PC-3 (cell line): ENCODE measurements at regions of chr2 and their contacts with region 1.

Region 1: GRCh38 chr2:24084386-24085361 is at the start of gene TP53I3:
- DNase-seq: peak; percentile 93
- ATAC-seq: peak; percentile 91
- H3K4me3 ChIP-seq: peak within 1 kb of the TSS; percentile 67
- H3K27ac ChIP-seq: peak within 1 kb of the TSS; percentile 36
- H3K4me1 ChIP-seq: peaks cover 14% of the 10 kb centered on the region
- H3K27me3 ChIP-seq: no peaks in the 10 kb centered on the region
- CTCF ChIP-seq: peak; percentile 88
- total RNA-seq, gene TP53I3: 37.0 and 42.4 TPM in 2 replicates

Region 2: GRCh38 chr2:23824777-23825212 is 259.9 kb before region 1 on chr2:
- CTCF ChIA-PET with region 1: interaction called, 9 read pairs
- POLR2A ChIA-PET with region 1: no interaction called
- intact Hi-C with region 1: loop called (anchors 1 kb)
- DNase-seq: peak; percentile 82
- ATAC-seq: peak; percentile 64
- H3K4me3 ChIP-seq: no peak overlapping the region
- H3K27ac ChIP-seq: no peak overlapping the region
- H3K4me1 ChIP-seq: peaks cover 12% of the 10 kb centered on the region; the same call in 1 of the 2 replicates
- H3K27me3 ChIP-seq: no peaks in the 10 kb centered on the region
- CTCF ChIP-seq: peak; percentile 81

Region 3: GRCh38 chr2:23926750-23927571 is 157.7 kb before region 1 on chr2 and contains the start of gene ATAD2B:
- CTCF ChIA-PET with region 1: interaction called, 24 read pairs
- POLR2A ChIA-PET with region 1: interaction called, 13 read pairs
- intact Hi-C with region 1: loop called (anchors 1 kb)
- DNase-seq: peak; percentile 98
- ATAC-seq: peak; percentile 85
- H3K4me3 ChIP-seq: peak within 1 kb of the TSS; percentile 89
- H3K27ac ChIP-seq: peak within 1 kb of the TSS; percentile 85
- H3K4me1 ChIP-seq: peaks cover 17% of the 10 kb centered on the region
- H3K27me3 ChIP-seq: no peaks in the 10 kb centered on the region
- CTCF ChIP-seq: peak; percentile 83
- total RNA-seq, gene ATAD2B: 8.6 TPM in 2 replicates

Region 4: DNA sequence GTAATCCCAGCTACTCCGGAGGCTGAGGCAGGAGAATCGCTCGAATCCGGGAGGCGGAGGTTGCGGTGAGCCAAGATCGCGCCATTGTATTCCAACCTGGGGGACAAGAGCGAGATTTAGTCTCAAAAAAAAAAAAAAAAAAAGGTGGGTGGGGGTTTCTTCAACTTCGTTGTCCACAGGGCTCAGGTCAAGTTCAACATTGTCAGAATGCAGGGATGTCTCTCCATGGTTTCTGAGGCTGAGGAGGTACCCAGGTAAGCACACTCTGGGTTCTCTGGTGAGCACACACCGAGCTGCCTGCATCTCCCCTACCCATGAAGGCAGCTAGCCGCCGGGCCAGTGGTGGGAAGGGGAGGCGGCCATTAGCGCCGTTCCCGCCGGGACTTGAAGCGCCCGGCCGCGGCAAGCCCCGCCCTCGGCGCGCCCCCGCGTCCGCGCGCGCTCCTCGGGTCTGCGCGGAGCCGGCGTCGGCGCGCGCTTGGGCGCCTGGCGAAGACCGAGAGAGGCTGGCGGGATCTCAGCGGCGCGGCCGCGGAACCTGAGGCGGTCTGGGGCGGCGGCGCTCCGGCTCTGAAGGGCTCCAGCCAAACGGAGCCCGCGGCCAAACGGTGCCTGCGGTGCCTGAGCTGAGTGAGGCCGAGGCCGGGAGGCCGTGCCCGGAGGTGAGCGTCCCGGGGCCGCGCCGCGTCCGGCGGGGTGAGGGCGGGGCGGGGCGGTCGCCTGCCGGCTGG is 144.5 kb before region 1 on chr2 and contains the start of gene UBXN2A:
- CTCF ChIA-PET with region 1: no interaction called
- POLR2A ChIA-PET with region 1: no interaction called
- intact Hi-C with region 1: loop called (anchors 2 kb)
- DNase-seq: peak; percentile 87
- ATAC-seq: peak; percentile 73
- H3K4me3 ChIP-seq: peak within 1 kb of the TSS; percentile 90
- H3K27ac ChIP-seq: 0 out of 2 replicates have a peak within 1 kb of the TSS, but pooled peaks have one; percentile 5
- H3K4me1 ChIP-seq: peaks cover 10% of the 10 kb centered on the region; the same call in 1 of the 2 replicates
- H3K27me3 ChIP-seq: no peaks in the 10 kb centered on the region
- CTCF ChIP-seq: no peak
- total RNA-seq, gene UBXN2A: 14.2 and 15.4 TPM in 2 replicates

Region 5: DNA sequence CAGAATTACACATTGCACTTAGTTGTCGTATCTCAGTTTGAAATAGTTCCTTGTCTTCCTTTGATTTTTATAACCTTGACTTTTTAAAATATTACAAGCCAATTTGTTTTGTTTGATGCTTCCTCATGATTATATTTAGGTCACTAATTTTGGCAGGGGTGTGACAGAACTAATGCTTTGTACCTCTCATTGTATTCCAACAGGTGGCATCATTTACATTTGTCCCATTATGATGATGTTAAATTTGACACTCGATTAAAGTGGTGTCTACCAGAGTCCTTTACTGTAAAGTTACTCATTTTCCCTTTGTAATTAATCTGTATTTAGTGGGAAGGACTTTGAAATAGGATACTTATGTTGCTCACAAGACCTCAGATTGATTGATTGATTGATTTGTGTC is 96.3 kb before region 1 on chr2:
- CTCF ChIA-PET with region 1: no interaction called
- POLR2A ChIA-PET with region 1: no interaction called
- intact Hi-C with region 1: loop called (anchors 1 kb)
- DNase-seq: peak; percentile 62
- ATAC-seq: peak; percentile 88
- H3K4me3 ChIP-seq: no peak overlapping the region
- H3K27ac ChIP-seq: no peak overlapping the region
- H3K4me1 ChIP-seq: no peaks in the 10 kb centered on the region
- H3K27me3 ChIP-seq: no peaks in the 10 kb centered on the region
- CTCF ChIP-seq: peak; percentile 80

Region 6: DNA sequence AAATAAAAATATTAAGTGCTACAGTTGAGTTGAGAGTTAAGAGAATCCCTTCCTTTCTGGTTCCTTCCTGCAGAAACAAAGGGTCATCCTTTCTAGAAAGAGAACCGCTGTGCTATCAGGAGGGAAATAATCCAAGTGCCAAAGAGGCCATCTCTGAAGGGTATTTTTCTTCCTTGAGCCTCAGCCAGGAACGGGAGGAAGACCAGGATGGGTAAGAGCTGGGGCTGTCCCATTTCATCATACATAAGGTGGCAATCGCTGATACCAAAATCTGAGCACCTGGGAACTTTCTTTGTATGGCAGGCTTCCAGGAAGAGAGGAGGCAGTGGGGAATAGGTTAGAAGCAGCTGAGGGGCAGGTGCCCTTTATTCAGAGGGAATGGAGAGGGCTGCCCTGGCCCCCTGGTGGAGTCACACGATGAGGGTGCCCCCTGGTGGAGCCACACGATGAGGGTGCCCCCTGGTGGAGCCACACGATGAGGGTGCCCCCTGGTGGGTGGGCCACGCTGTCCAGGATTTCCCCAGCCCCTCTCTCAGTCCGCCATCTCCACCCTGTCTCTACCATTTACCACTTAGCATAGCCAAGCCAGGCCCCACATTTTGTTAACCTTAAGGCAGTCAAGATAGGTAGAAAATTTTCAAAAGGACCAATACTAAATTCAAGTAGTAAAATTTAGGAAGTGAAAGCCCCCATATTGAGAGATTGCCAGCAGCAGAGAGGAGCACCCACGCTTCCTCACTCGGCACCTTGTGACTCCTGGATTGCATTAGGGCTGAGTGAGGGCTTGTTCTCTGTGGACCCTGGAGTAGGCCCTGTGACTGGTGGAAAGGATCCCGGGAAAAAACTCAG is 79.7 kb after region 1 on chr2:
- CTCF ChIA-PET with region 1: no interaction called
- POLR2A ChIA-PET with region 1: no interaction called
- intact Hi-C with region 1: loop called (anchors 1 kb)
- DNase-seq: peak; percentile 30
- ATAC-seq: peak; percentile 27; the same call in 1 of the 2 replicates
- H3K4me3 ChIP-seq: no peak overlapping the region
- H3K27ac ChIP-seq: no peak overlapping the region
- H3K4me1 ChIP-seq: no peaks in the 10 kb centered on the region
- H3K27me3 ChIP-seq: no peaks in the 10 kb centered on the region
- CTCF ChIP-seq: peak; percentile 91

Region 7: DNA sequence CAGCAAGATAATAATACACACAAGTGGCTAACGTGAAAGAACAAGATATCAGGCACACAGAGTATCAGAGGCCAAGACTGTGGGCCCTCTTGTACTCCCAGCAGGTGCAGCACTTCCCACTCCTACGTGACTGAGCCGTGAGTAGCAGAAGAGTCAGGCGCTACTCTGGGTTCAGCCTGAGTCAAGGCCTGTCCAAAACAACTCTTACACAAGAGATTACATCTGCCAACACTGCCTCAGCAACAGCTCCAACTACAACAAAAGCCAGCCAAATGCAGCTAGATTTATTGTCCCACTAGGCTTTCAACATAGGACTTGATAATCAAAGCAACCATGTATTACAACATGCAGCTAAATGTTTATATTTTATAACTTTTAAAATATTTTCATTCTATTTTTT is 219.4 kb after region 1 on chr2:
- CTCF ChIA-PET with region 1: no interaction called
- POLR2A ChIA-PET with region 1: no interaction called
- intact Hi-C with region 1: no loop called
- DNase-seq: no peak
- ATAC-seq: no peak
- H3K4me3 ChIP-seq: no peak overlapping the region
- H3K27ac ChIP-seq: no peak overlapping the region
- H3K4me1 ChIP-seq: no peaks in the 10 kb centered on the region
- H3K27me3 ChIP-seq: no peaks in the 10 kb centered on the region
- CTCF ChIP-seq: no peak

Region 8: DNA sequence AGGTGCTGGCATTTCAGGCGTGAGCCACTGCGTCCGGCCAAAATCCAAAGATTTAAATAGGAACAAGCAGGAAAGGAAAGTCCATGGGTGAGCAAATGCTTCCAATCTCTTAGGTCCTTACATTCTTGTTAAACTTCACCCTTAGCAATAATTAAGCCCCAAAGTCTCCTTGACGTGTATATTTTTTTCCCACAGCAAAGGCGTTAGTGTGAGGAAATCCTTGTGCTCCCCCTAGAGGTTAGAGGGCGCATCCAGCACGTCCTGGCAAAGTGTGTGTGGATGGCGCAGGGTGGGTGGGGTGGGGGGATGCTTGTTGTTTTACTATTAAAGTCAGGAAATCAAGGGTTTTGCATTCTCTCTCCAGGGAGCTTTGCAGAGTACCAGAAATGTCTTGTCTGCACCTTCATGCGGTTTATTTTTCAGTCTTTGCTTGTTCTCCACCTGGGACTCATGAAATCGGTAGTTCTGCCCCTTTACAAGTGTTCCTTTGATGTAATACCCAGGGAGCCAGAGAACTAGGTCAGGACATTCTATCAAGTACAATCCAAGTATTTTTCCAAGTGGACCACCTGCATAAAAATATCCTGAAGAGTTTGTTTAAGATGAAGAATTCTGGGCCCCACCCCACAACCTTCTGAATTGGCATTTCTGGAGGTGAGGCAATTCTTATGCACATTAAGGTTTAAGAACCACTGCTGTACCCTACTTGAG is 297.8 kb after region 1 on chr2:
- CTCF ChIA-PET with region 1: interaction called, 3 read pairs
- POLR2A ChIA-PET with region 1: no interaction called
- intact Hi-C with region 1: loop called (anchors 1 kb)
- DNase-seq: peak; percentile 78
- ATAC-seq: peak; percentile 97
- H3K4me3 ChIP-seq: no peak overlapping the region
- H3K27ac ChIP-seq: no peak overlapping the region
- H3K4me1 ChIP-seq: no peaks in the 10 kb centered on the region
- H3K27me3 ChIP-seq: no peaks in the 10 kb centered on the region
- CTCF ChIP-seq: peak; percentile 62